A673 (cell line): ENCODE measurements at regions of chr17 and their contacts with region 1.

Region 1: GRCh38 chr17:63600569-63601438 is at the start of gene TACO1:
- DNase-seq: peak; percentile 87
- H3K4me3 ChIP-seq: peak within 1 kb of the TSS; percentile 82
- H3K27ac ChIP-seq: peak within 1 kb of the TSS; percentile 83
- H3K4me1 ChIP-seq: peaks cover 11% of the 10 kb centered on the region
- H3K27me3 ChIP-seq: no peaks in the 10 kb centered on the region
- CTCF ChIP-seq: no peak
- total RNA-seq, gene TACO1: 38.7 and 39.0 TPM in 2 replicates

Region 2: GRCh38 chr17:63464691-63465236 is 136.0 kb before region 1 on chr17:
- CTCF ChIA-PET with region 1: no interaction called
- POLR2A ChIA-PET with region 1: no interaction called
- intact Hi-C with region 1: no loop called
- DNase-seq: no peak
- H3K4me3 ChIP-seq: no peak overlapping the region
- H3K27ac ChIP-seq: no peak overlapping the region
- H3K4me1 ChIP-seq: peaks cover 3% of the 10 kb centered on the region
- H3K27me3 ChIP-seq: no peaks in the 10 kb centered on the region
- CTCF ChIP-seq: no peak

Region 3: DNA sequence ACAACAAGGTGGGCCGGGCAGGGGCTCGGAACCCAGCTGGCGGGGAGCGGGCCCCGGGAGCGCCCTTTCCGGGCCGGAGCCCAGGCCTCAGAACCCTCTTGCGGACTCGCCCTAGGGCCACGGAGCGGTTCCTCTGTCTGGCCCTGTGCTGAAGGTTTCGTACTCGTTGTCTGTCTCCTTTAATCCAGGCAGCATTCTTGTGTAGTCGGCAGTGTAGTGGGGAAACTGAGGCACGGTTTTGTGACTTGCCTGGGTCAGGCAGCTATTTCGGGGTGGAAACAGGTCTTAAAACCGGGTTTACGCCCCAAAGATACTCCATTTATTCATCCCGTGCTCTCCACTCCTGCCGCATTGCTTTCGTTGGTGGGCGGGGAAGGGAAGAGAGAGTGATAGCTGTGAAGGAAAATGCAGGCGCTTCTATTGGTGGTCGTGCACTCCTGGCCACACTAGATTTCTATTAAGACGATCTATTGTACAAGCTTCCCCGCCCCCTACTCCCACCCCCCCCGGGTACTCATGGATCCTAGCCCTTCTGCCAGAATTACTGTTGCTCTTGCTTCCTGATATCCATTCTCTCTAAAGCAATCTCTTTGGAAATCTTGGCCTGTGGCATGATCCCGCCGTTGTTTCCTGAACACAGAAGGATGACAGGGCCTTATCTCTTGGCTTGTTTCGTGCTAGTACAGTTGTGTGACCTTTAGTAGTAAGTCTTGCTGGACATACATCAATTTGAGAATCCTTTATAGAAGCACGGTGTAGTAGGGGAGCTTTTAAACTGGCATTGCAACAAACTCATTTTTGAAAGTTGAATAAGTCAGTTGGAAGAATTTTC is 49.8 kb before region 1 on chr17:
- CTCF ChIA-PET with region 1: no interaction called
- POLR2A ChIA-PET with region 1: interaction called, 23 read pairs
- intact Hi-C with region 1: no loop called
- DNase-seq: peak; percentile 78
- H3K4me3 ChIP-seq: peak overlapping the region; percentile 90
- H3K27ac ChIP-seq: peak overlapping the region; percentile 91
- H3K4me1 ChIP-seq: peaks cover 4% of the 10 kb centered on the region
- H3K27me3 ChIP-seq: no peaks in the 10 kb centered on the region
- CTCF ChIP-seq: no peak